ENCODE measurements at regions of chr10 and their contacts with region 1.

Region 1: GRCh38 chr10:114550756-114551635 is 107.1 kb downstream of the ABLIM1 start:
- DNase-seq: peak; percentile 78
- ATAC-seq: peak; percentile 47

Region 2: DNA sequence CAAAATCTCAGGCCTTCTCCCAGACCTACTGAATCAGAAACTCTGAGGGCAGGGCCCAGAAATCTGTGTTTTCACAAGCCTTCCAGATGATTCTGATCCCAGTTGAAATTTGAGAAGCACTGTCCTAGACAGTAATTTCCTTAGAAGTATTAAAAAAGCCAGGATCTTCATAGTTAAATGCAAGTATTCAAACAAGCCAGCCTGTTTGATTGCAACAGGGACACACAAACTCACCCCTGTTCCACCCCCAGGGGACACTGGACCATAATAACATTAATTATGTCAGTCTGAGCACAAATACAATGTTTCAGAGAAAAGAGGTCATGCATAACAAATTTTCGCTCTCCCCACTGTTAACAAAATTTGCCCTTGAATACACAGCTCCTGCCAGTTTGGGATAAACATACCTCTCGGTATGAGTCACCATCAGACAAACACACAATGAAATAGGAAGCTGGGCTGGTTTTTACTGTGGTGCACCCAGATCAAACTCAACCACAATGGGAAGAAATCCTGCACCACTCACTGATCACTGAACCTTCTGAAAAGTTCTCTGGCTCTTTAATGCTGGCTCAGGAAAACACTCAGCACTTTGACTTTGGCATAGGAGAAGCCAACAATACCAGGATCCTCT is 72.8 kb after region 1 on chr10:
- intact Hi-C with region 1: loop called (anchors 10 kb)
- DNase-seq: no peak
- ATAC-seq: peak; percentile 7

Region 3: GRCh38 chr10:114703377-114704107 is 152.5 kb after region 1 on chr10:
- intact Hi-C with region 1: loop called (anchors 10 kb)
- DNase-seq: no peak
- ATAC-seq: peak; percentile 34

Region 4: GRCh38 chr10:114779803-114780609 is 229.0 kb after region 1 on chr10:
- intact Hi-C with region 1: loop called (anchors 2 kb)
- DNase-seq: no peak
- ATAC-seq: no peak